ENCODE measurements at regions of chr5 and their contacts with region 1.

Region 1: GRCh38 chr5:73454351-73455036 is 5.9 kb upstream of the FOXD1 start:
- DNase-seq: peak in 9 of 14 experiments; percentile 17 to 75 (median 34)
- ATAC-seq: peak; percentile 92
- H3K4me3 ChIP-seq: no peak overlapping the region
- H3K4me3 Mint-ChIP-seq: no peak overlapping the region
- H3K27ac ChIP-seq: no peak overlapping the region
- H3K27ac Mint-ChIP-seq: no peak overlapping the region
- H3K4me1 ChIP-seq: peaks cover 14% of the 10 kb centered on the region
- H3K4me1 Mint-ChIP-seq: no peaks in the 10 kb centered on the region
- H3K27me3 ChIP-seq: peaks cover 54 to 84% of the 10 kb centered on the region in 2 experiments
- H3K27me3 Mint-ChIP-seq: peaks cover 85% of the 10 kb centered on the region
- CTCF ChIP-seq: peak; percentile 82

Region 2: DNA sequence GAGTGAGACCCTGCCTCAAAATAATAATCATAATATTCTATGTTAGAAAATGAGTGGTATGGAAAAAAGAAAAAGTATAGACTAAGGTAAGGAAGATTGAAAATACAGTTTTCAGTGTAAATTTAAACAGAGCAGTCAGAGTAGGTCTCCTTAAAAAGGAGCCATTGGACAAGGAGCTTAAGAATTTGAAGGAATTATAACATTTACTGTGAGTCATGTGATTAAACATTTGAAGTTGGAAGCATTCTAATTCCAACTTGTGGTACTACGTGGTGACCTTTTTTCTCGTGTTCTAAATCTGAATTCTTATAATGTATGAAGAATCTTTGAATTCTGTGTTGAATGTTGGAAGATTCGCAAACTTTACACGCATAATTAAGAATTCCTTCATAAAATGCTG is 373.4 kb before region 1 on chr5:
- CTCF ChIA-PET with region 1: interaction called, 7 read pairs
- POLR2A ChIA-PET with region 1: no interaction called
- intact Hi-C with region 1: loop called (anchors 2 to 5 kb)
- DNase-seq: no peak
- ATAC-seq: no peak
- H3K4me3 ChIP-seq: no peak overlapping the region
- H3K4me3 Mint-ChIP-seq: no peak overlapping the region
- H3K27ac ChIP-seq: no peak overlapping the region
- H3K27ac Mint-ChIP-seq: no peak overlapping the region
- H3K4me1 ChIP-seq: no peaks in the 10 kb centered on the region
- H3K4me1 Mint-ChIP-seq: no peaks in the 10 kb centered on the region
- H3K27me3 ChIP-seq: no peaks in the 10 kb centered on the region
- H3K27me3 Mint-ChIP-seq: peaks cover 16% of the 10 kb centered on the region
- CTCF ChIP-seq: no peak

Region 3: GRCh38 chr5:73303148-73304079 is 151.1 kb before region 1 on chr5:
- CTCF ChIA-PET with region 1: interaction called, 3 read pairs
- POLR2A ChIA-PET with region 1: no interaction called
- intact Hi-C with region 1: loop called (anchors 5 kb)
- DNase-seq: no peak
- ATAC-seq: no peak
- H3K4me3 ChIP-seq: no peak overlapping the region
- H3K4me3 Mint-ChIP-seq: no peak overlapping the region
- H3K27ac ChIP-seq: no peak overlapping the region
- H3K27ac Mint-ChIP-seq: no peak overlapping the region
- H3K4me1 ChIP-seq: peaks cover 17% of the 10 kb centered on the region
- H3K4me1 Mint-ChIP-seq: peaks cover 21% of the 10 kb centered on the region
- H3K27me3 ChIP-seq: peaks cover 78 to 88% of the 10 kb centered on the region in 2 experiments
- H3K27me3 Mint-ChIP-seq: peaks cover 93% of the 10 kb centered on the region
- CTCF ChIP-seq: no peak

Region 4: GRCh38 chr5:73387601-73388305 is 66.7 kb before region 1 on chr5:
- CTCF ChIA-PET with region 1: interaction called, 4 read pairs
- POLR2A ChIA-PET with region 1: interaction called, 8 read pairs
- intact Hi-C with region 1: loop called in 1 of 2 experiments (anchors 5 kb)
- DNase-seq: peak in 13 of 14 experiments; percentile 25 to 88 (median 44)
- ATAC-seq: peak; percentile 95
- H3K4me3 ChIP-seq: no peak overlapping the region
- H3K4me3 Mint-ChIP-seq: peak overlapping the region; percentile 62
- H3K27ac ChIP-seq: peak overlapping the region in 1 of 2 donors; percentile 4
- H3K27ac Mint-ChIP-seq: peak overlapping the region; percentile 34
- H3K4me1 ChIP-seq: peaks cover 29% of the 10 kb centered on the region
- H3K4me1 Mint-ChIP-seq: peaks cover 38% of the 10 kb centered on the region
- H3K27me3 ChIP-seq: peaks cover 12 to 14% of the 10 kb centered on the region in 2 experiments
- H3K27me3 Mint-ChIP-seq: peaks cover 19% of the 10 kb centered on the region
- CTCF ChIP-seq: no peak

Region 5: GRCh38 chr5:73625944-73626811 is 171.7 kb after region 1 on chr5 and contains the start of gene ARHGEF28:
- CTCF ChIA-PET with region 1: no interaction called
- POLR2A ChIA-PET with region 1: no interaction called
- intact Hi-C with region 1: no loop called
- DNase-seq: peak in 7 of 14 experiments; percentile 3 to 44 (median 11)
- ATAC-seq: no peak
- H3K4me3 ChIP-seq: peak within 1 kb of the TSS; percentile 26
- H3K4me3 Mint-ChIP-seq: peak within 1 kb of the TSS; percentile 85
- H3K27ac ChIP-seq: no peak within 1 kb of the TSS
- H3K27ac Mint-ChIP-seq: no peak within 1 kb of the TSS
- H3K4me1 ChIP-seq: peaks cover 11% of the 10 kb centered on the region
- H3K4me1 Mint-ChIP-seq: peaks cover 5% of the 10 kb centered on the region
- H3K27me3 ChIP-seq: peaks cover 26 to 44% of the 10 kb centered on the region in 2 experiments
- H3K27me3 Mint-ChIP-seq: peaks cover 62% of the 10 kb centered on the region
- CTCF ChIP-seq: no peak
- total RNA-seq, gene ARHGEF28: not detected

Measured in CD4-positive, alpha-beta T cell (primary cell).